Cardiac septum (tissue), 1 donor: ENCODE measurements at regions of chr13 and their contacts with region 1.

Region 1: GRCh38 chr13:113153810-113154748 is 4.4 kb upstream of the PROZ start:
- DNase-seq: peak; percentile 89

Region 2: GRCh38 chr13:112953591-112954487 is 200.2 kb before region 1 on chr13:
- intact Hi-C with region 1: no loop called
- DNase-seq: peak; percentile 75

Region 3: GRCh38 chr13:113208424-113209335 is 54.6 kb after region 1 on chr13 and contains the start of gene PCID2:
- intact Hi-C with region 1: loop called (anchors 2 kb)
- DNase-seq: peak; percentile 94
- total RNA-seq, gene PCID2: 47.8 TPM